ENCODE measurements at regions of chr2 and their contacts with region 1.

Region 1: GRCh38 chr2:112692496-112692911 is 28.3 kb upstream of the NT5DC4 start:
- DNase-seq: peak; percentile 88 to 96
- H3K4me3 ChIP-seq: peak overlapping the region; percentile 12; the same call in 1 of the 2 replicates
- H3K27ac ChIP-seq: peak overlapping the region; percentile 77
- H3K4me1 ChIP-seq: peaks cover 46% of the 10 kb centered on the region
- H3K27me3 ChIP-seq: no peaks in the 10 kb centered on the region
- CTCF ChIP-seq: no peak

Region 2: DNA sequence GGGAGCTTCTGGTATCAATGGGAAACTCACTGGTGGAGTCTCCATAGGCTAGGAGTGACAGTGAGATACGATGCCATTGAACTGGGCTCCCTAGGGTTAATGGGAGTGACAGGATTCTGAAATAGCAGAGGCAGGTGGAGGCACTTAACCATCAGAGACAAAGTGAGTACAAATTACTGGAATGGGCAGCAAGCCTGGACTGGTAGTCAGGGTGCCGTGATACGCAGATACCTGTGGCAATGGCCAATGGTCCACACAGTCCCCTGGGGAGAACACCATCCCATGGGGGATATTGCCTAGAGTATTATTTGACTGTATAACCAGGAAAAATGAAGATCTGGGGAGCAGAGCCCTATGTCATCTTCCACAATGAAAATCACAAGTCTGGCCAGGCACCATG is 90.8 kb before region 1 on chr2:
- CTCF ChIA-PET with region 1: interaction called, 4 read pairs
- POLR2A ChIA-PET with region 1: interaction called, 5 read pairs
- intact Hi-C with region 1: loop called (anchors 1 kb)
- DNase-seq: no peak
- H3K4me3 ChIP-seq: no peak overlapping the region
- H3K27ac ChIP-seq: no peak overlapping the region
- H3K4me1 ChIP-seq: peaks cover 23% of the 10 kb centered on the region
- H3K27me3 ChIP-seq: no peaks in the 10 kb centered on the region
- CTCF ChIP-seq: no peak

Region 3: GRCh38 chr2:112656679-112657078 is 35.8 kb before region 1 on chr2:
- CTCF ChIA-PET with region 1: interaction called, 12 read pairs
- POLR2A ChIA-PET with region 1: interaction called, 3 read pairs
- intact Hi-C with region 1: no loop called
- DNase-seq: no peak
- H3K4me3 ChIP-seq: no peak overlapping the region; the same call in 1 of the 2 replicates
- H3K27ac ChIP-seq: peak overlapping the region; percentile 67
- H3K4me1 ChIP-seq: peaks cover 97% of the 10 kb centered on the region
- H3K27me3 ChIP-seq: no peaks in the 10 kb centered on the region
- CTCF ChIP-seq: no peak